Cardiac septum (tissue), 1 donor: ENCODE measurements at regions of chr7 and their contacts with region 1.

Region 1: GRCh38 chr7:36291387-36292316 is 98.0 kb upstream of the ANLN start:
- DNase-seq: peak; percentile 90

Region 2: DNA sequence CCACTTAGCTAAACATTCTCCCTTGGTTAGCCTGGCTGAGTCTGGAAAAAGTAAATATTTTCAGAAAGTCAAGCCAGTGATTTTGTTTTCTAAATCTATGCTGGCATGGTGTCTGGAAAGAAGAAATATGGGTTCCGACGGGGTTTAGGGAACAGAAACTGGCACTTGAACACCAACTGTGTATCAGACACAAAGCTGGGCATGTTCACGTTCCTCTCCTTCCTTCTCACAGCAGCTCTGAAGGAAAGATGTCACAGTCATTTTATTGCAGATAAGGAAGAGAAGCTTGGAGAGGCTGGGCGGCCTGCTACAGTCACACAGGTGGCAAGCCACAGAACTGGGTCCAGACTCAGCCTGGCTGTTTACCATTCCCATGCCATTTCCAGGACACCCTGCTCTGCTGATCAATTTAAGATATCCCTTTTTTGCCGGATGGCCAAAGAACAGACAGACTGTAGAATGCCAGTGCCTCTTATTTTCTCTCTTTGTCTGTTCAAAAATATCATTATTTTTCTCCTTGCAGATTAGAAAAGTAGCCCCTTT is 715.5 kb before region 1 on chr7:
- intact Hi-C with region 1: no loop called
- DNase-seq: no peak

Region 3: DNA sequence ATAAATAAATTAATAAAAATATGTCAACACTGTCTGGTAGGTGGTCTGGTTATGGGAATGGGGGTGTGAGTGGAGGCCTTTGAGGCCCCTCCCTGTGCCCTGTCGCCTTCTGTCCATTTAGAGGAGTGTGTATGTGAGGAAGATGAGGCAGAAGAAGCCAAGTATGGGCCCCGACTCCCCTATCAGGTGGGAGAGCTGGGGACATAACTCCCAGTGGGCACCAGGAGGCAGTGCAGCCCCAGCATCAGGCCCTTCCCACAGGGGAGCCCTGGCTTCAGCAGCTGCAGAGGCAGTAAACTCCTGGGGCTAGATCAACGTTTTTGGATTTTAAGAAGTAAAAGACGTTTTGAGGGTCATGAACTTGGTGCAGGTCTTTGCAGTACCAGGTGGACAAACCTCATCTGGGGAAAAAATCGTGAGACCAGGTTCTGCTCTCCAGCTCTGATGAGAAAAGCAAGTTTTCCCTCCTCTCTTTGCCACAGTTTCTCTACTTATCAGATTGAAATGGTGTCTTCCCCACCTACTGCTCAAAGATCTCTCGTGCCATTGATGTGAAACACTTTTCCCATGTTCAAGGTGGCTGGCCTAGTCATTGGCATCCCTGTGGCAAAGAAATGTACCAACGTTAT is 306.4 kb before region 1 on chr7:
- intact Hi-C with region 1: loop called (anchors 1 kb)
- DNase-seq: peak; percentile 90

Region 4: GRCh38 chr7:36037121-36037662 is 254.5 kb before region 1 on chr7:
- intact Hi-C with region 1: loop called (anchors 5 kb)
- DNase-seq: no peak

Region 5: DNA sequence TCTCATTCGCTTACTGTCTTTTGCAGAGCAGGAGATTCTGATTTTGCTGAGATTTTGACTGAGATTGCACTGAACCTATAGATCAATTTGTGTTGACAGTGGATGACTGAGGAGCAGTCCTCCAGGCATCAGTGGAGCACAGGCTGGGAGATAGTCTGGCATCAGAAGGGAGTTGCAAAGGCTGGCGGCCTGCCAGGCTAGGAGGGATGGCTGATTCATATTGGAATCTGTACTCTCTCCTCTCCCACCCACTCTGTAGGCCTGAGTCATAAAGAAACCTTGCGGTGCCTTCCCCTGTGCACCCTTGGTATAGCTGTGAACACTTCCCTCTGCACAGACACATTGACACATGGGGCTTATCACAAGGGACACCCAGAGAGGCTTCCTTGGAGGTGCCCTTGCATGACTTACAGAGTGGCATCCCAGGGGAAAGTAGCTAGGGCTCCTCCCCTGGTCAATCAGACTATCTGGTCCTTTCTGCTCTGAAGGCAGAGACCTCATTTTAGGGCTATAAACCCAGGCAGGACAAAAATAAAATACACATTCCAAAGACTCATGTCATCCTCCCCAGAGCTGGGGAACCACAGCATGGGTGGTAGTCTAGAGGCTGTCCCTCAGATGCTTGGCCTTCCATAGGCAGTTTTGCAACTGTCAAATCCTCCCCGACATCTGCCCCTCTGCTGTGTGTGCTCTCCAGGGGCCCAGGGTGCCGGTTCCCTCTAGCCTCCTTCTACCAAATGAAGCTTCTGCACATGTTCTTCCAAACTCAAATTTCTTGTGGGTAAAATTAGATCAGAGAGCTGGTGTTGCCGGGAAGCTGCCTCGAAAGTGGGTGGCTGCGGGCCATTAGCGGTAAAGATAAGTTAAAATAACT is 176.0 kb before region 1 on chr7:
- intact Hi-C with region 1: no loop called
- DNase-seq: no peak

Region 6: GRCh38 chr7:36132012-36132411 is 159.6 kb before region 1 on chr7:
- intact Hi-C with region 1: loop called (anchors 2 kb)
- DNase-seq: no peak

Region 7: DNA sequence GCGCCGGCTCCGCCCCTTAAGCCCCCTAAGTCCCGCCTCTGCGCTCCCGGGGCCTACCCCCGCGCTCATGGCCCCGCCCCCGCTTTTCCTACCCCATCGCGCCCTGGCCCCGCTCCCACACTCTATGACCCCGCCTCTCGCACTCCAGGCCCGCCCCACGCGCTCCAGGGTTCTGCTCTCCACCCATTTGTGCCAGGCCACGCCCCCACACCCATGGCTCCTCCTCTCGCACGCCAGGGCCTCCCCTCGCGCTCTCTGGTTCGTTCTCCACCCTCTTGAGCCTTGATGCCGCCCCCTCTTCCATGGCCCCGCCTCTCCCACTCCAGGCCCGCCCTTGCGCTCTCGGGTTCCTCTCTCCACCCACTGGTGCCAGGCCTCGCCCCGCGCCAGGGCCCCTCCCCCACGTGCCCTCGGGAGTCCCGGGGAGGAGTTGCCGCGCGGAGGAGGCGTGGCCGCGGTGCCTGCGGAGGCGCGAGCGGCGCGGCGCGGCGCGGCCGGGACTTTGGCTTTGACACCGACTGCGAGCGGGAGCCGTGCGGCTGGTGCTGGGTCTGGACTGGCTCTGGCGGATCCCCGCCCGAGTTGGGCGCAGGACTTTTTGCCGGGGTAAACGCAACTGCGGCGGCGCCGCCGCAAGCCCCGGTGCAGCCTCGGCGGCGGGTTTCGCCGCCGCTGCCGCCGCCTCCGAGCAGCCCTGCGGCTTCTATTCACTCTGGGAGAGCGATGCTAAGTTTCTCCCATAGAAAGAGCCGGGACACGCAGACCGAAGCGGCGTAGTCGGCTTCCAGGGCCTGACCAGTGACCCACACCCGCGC is 138.7 kb before region 1 on chr7 and contains the start of gene EEPD1:
- intact Hi-C with region 1: loop called (anchors 5 kb)
- DNase-seq: peak; percentile 100
- total RNA-seq, gene EEPD1: 6.6 TPM